H1 (cell line): ENCODE measurements at regions of chr7 and their contacts with region 1.

Region 1: GRCh38 chr7:133344275-133344674 is 91.4 kb downstream of the EXOC4 start:
- DNase-seq: no peak
- H3K4me3 ChIP-seq: no peak overlapping the region
- H3K27ac ChIP-seq: no peak overlapping the region
- H3K4me1 ChIP-seq: peaks cover 0 to 8% (median 4%) of the 10 kb centered on the region in 4 experiments; a peak in 4 of 7 replicates
- H3K27me3 ChIP-seq: no peaks in the 10 kb centered on the region
- CTCF ChIP-seq: peak in 2 of 3 experiments; percentile 33 to 53; a peak in 2 of 4 replicates
- EP300 ChIP-seq: no peak
- POLR2A ChIP-seq: no peak
- RAD21 ChIP-seq: peak; percentile 60 to 69

Region 2: GRCh38 chr7:133275008-133275407 is 69.3 kb before region 1 on chr7:
- CTCF ChIA-PET with region 1: interaction called, 11 read pairs
- POLR2A ChIA-PET with region 1: no interaction called
- DNase-seq: no peak
- H3K4me3 ChIP-seq: no peak overlapping the region
- H3K27ac ChIP-seq: no peak overlapping the region
- H3K4me1 ChIP-seq: no peaks in the 10 kb centered on the region
- H3K27me3 ChIP-seq: no peaks in the 10 kb centered on the region
- CTCF ChIP-seq: peak in 2 of 3 experiments; percentile 35 to 50; a peak in 2 of 4 replicates
- EP300 ChIP-seq: no peak
- POLR2A ChIP-seq: no peak
- RAD21 ChIP-seq: peak; percentile 63 to 64

Region 3: GRCh38 chr7:133330085-133330484 is 14.2 kb before region 1 on chr7:
- CTCF ChIA-PET with region 1: interaction called, 17 read pairs
- POLR2A ChIA-PET with region 1: no interaction called
- DNase-seq: peak in 1 of 2 experiments; percentile 57
- H3K4me3 ChIP-seq: no peak overlapping the region
- H3K27ac ChIP-seq: no peak overlapping the region
- H3K4me1 ChIP-seq: peaks cover 0 to 10% (median 3%) of the 10 kb centered on the region in 4 experiments; a peak in 5 of 7 replicates
- H3K27me3 ChIP-seq: no peaks in the 10 kb centered on the region
- CTCF ChIP-seq: no peak
- EP300 ChIP-seq: no peak
- POLR2A ChIP-seq: no peak
- RAD21 ChIP-seq: no peak